Mammary epithelial cell (primary cell): ENCODE measurements at regions of chr1 and their contacts with region 1.

Region 1: GRCh38 chr1:48870596-48870995 is 93.9 kb upstream of the BEND5 start:
- DNase-seq: no peak
- H3K4me3 ChIP-seq: no peak overlapping the region
- H3K27ac ChIP-seq: no peak overlapping the region
- H3K4me1 ChIP-seq: peaks cover 24% of the 10 kb centered on the region
- H3K27me3 ChIP-seq: no peaks in the 10 kb centered on the region
- CTCF ChIP-seq: peak; percentile 73 to 74

Region 2: GRCh38 chr1:48552420-48552819 is 318.2 kb before region 1 on chr1:
- CTCF ChIA-PET with region 1: no interaction called
- dilution Hi-C with region 1: no loop called
- in situ Hi-C with region 1: no loop called
- intact Hi-C with region 1: loop called (anchors 1 kb)
- DNase-seq: peak; percentile 37
- H3K4me3 ChIP-seq: no peak overlapping the region
- H3K27ac ChIP-seq: no peak overlapping the region
- H3K4me1 ChIP-seq: peaks cover 21% of the 10 kb centered on the region
- H3K27me3 ChIP-seq: no peaks in the 10 kb centered on the region
- CTCF ChIP-seq: peak; percentile 45 to 70

Region 3: GRCh38 chr1:48572646-48573261 is 297.8 kb before region 1 on chr1:
- CTCF ChIA-PET with region 1: no interaction called
- dilution Hi-C with region 1: no loop called
- in situ Hi-C with region 1: no loop called
- intact Hi-C with region 1: loop called (anchors 1 kb)
- DNase-seq: peak; percentile 49
- H3K4me3 ChIP-seq: no peak overlapping the region
- H3K27ac ChIP-seq: no peak overlapping the region
- H3K4me1 ChIP-seq: peaks cover 12% of the 10 kb centered on the region
- H3K27me3 ChIP-seq: no peaks in the 10 kb centered on the region
- CTCF ChIP-seq: peak; percentile 85 to 88

Region 4: DNA sequence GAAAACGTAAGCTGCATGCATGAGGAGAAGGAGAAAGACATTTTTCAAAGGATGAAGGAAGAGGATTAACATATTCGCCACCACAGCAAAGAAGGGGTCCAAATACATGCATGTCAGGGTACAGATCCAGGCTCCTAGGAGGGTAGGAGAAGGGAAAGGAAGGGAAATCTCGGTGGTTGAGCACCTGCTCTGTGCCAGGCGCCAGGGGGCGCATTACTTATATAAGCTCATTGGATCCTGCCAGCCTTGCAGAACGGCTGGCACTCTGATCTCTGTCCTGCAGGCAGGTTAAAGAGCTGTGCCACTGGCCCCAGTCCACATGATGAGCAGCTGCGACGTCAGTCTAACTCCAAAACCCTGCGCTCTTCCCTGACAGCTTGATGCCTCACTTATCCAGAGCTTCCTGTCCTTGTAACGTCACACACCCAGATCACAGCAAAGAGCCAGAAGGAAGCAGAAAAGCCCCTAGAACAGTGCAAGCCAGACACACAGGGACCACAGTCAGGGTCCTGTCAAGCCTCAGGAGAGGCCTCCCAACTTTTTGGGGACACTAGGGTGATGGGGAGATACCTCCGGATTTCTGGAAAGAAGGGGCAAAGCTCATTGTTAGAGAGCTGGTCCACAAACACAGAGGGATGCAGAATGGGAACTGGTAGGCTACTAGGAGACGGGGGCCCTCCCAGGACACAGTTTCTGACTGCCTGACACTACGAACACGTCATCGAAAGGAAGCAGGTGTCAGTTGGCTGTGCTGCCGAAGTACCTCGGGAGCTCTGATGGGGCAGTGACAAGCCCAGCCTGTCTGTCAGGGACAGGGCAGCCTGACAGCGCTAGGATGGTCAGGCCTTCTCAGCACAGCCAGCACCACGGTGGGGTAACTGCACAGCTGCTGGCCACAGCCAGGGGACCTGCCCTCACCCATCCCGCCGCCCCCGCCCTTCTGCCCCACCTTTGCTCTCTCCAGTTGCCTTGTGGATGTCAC is 193.0 kb before region 1 on chr1:
- CTCF ChIA-PET with region 1: no interaction called
- dilution Hi-C with region 1: no loop called
- in situ Hi-C with region 1: no loop called
- intact Hi-C with region 1: loop called (anchors 5 kb)
- DNase-seq: peak; percentile 49
- H3K4me3 ChIP-seq: no peak overlapping the region
- H3K27ac ChIP-seq: no peak overlapping the region
- H3K4me1 ChIP-seq: peaks cover 11% of the 10 kb centered on the region
- H3K27me3 ChIP-seq: no peaks in the 10 kb centered on the region
- CTCF ChIP-seq: peak; percentile 59 to 74

Region 5: DNA sequence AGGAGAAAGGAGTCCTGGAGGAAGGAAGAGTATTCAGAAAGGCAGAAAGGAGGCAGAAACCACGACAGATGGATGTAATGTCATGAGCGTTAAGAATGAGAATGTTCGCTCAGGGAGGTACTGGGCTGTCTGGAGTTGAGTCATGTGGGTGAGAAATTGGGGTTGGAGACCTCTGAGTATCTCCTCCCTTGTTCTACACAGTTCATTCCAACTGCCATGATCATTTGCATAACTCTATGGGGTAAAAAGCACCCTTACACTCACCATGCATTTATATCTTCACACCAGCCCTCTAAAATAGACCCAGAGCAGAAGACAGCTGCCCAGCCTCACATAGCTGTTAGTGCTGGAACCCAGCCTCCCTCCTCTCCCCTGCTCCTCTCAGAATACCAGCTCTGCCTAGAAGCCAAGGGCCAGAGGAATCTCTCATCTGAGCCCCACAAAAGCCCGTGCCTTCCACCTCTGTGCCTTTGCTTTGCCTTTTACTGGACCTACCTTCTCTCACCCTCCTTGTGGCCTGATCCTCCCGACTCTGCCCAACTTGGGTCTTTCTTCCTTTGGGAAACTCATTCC is 179.1 kb before region 1 on chr1:
- CTCF ChIA-PET with region 1: no interaction called
- dilution Hi-C with region 1: no loop called
- in situ Hi-C with region 1: no loop called
- intact Hi-C with region 1: loop called (anchors 5 kb)
- DNase-seq: no peak
- H3K4me3 ChIP-seq: no peak overlapping the region
- H3K27ac ChIP-seq: no peak overlapping the region
- H3K4me1 ChIP-seq: peaks cover 35% of the 10 kb centered on the region
- H3K27me3 ChIP-seq: no peaks in the 10 kb centered on the region
- CTCF ChIP-seq: no peak

Region 6: GRCh38 chr1:48817505-48818114 is 53.0 kb before region 1 on chr1:
- CTCF ChIA-PET with region 1: interaction called, 5 read pairs
- dilution Hi-C with region 1: no loop called
- in situ Hi-C with region 1: no loop called
- intact Hi-C with region 1: loop called (anchors 2 kb)
- DNase-seq: peak; percentile 47
- H3K4me3 ChIP-seq: no peak overlapping the region
- H3K27ac ChIP-seq: no peak overlapping the region
- H3K4me1 ChIP-seq: no peaks in the 10 kb centered on the region
- H3K27me3 ChIP-seq: no peaks in the 10 kb centered on the region
- CTCF ChIP-seq: peak; percentile 94 to 97

Region 7: GRCh38 chr1:48831120-48831978 is 39.2 kb before region 1 on chr1:
- CTCF ChIA-PET with region 1: no interaction called
- dilution Hi-C with region 1: no loop called
- in situ Hi-C with region 1: no loop called
- intact Hi-C with region 1: no loop called
- DNase-seq: no peak
- H3K4me3 ChIP-seq: no peak overlapping the region
- H3K27ac ChIP-seq: no peak overlapping the region
- H3K4me1 ChIP-seq: no peaks in the 10 kb centered on the region
- H3K27me3 ChIP-seq: peaks cover under 1% of the 10 kb centered on the region
- CTCF ChIP-seq: no peak

Region 8: DNA sequence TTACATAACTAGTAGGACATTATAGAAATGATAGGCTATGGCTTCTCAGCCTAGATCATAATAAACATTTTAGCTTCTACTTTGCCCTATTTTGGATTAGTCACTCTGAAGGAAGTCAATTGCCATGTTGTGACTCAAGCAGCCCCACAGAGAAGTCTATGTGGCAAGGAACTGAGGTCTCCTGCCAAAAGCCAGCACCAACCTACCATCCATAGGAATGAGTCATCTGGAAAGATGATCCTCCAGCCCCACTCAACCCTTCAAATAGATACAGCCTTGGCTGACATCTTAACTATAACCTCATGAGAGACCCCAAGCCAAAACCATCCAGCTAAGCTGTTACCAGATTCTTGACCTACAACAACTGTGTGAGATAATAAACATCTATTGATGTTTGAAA is 17.6 kb before region 1 on chr1:
- CTCF ChIA-PET with region 1: no interaction called
- dilution Hi-C with region 1: no loop called
- in situ Hi-C with region 1: no loop called
- intact Hi-C with region 1: loop called (anchors 2 kb)
- DNase-seq: peak; percentile 84
- H3K4me3 ChIP-seq: no peak overlapping the region
- H3K27ac ChIP-seq: no peak overlapping the region
- H3K4me1 ChIP-seq: peaks cover 20% of the 10 kb centered on the region
- H3K27me3 ChIP-seq: no peaks in the 10 kb centered on the region
- CTCF ChIP-seq: no peak